ENCODE measurements at regions of chr5 and their contacts with region 1.

Region 1: GRCh38 chr5:136249678-136250266 is 56.8 kb upstream of the SMIM32 start:
- DNase-seq: no peak
- H3K4me3 ChIP-seq: no peak overlapping the region
- H3K27ac ChIP-seq: no peak overlapping the region
- H3K4me1 ChIP-seq: no peaks in the 10 kb centered on the region
- H3K27me3 ChIP-seq: peaks cover 0 to 6% (median 0%) of the 10 kb centered on the region in 4 donors
- CTCF ChIP-seq: peak; percentile 55 to 78 (median 61)
- EP300 ChIP-seq: no peak
- POLR2A ChIP-seq: no peak

Region 2: GRCh38 chr5:136769900-136770684 is 520.3 kb after region 1 on chr5:
- intact Hi-C with region 1: loop called (anchors 5 kb)
- DNase-seq: peak; percentile 90
- H3K4me3 ChIP-seq: no peak overlapping the region
- H3K27ac ChIP-seq: no peak overlapping the region
- H3K4me1 ChIP-seq: no peaks in the 10 kb centered on the region
- H3K27me3 ChIP-seq: peaks cover 0 to 15% (median 0%) of the 10 kb centered on the region in 4 donors
- CTCF ChIP-seq: peak; percentile 47 to 67 (median 52)
- EP300 ChIP-seq: no peak
- POLR2A ChIP-seq: no peak

Measured in esophagus muscularis mucosa (tissue), 4 donors.